ENCODE measurements at regions of chrX and their contacts with region 1.

Region 1: DNA sequence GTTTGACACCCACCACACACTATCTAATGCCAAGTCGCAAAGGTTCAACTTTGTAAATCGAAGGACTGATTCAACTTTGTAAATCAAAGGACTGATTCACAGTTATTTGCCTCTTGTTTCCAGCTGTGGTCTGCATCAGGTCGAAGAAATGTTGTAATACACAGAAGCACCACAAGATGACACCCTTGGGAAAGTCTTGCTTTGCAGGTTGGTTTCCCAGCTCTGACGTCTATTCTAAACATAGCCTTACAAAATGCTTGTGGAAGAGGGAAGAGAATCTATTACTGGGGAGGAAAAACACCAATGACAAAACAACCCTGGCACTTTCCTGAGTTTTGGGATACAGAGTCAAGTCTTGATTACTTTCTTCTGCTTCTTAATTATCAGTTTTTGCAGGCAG is 35.3 kb downstream of the SUPT20HL1 start:
- DNase-seq: peak; percentile 58
- H3K4me3 Mint-ChIP-seq: no peak overlapping the region
- H3K27ac Mint-ChIP-seq: no peak overlapping the region
- H3K4me1 Mint-ChIP-seq: no peaks in the 10 kb centered on the region
- H3K27me3 Mint-ChIP-seq: no peaks in the 10 kb centered on the region

Region 2: DNA sequence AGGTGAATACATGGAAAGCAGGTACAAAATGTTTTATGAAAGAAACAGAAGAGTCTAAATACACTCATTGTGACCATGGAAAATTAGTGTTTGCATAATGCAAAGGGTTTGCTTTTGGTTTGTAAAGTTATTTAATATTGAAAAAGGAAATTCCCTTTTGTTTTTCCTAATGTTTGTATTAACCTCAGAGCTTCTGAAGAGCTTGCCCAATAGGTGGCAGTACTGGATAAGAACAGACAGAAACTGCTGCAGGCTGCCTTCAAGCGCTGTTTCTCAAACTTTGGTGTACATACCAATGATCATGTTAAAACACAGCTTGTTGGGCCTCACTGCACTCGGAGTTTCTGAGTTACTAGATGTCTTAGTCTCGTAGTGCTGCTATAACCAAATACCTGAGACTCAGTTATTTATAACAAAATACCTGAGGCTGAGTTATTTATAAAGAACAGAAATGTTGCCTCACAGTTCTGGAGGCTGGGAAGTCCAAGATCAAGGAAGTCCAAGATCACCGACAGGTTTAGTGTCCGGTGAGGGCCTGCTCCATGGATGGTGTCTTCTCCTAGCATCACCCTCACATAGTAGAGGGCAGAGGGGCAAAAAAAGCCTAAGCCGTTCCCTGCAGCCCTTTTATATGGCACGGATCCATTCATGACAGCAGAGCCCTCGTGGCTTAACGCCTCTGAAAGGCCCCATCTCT is 136.1 kb before region 1 on chrX:
- CTCF ChIA-PET with region 1: interaction called, 7 read pairs
- intact Hi-C with region 1: loop called (anchors 2 kb)
- DNase-seq: peak; percentile 52
- H3K4me3 Mint-ChIP-seq: no peak overlapping the region
- H3K27ac Mint-ChIP-seq: no peak overlapping the region
- H3K4me1 Mint-ChIP-seq: peaks cover 14% of the 10 kb centered on the region
- H3K27me3 Mint-ChIP-seq: no peaks in the 10 kb centered on the region

Region 3: GRCh38 chrX:24498975-24499374 is 103.2 kb after region 1 on chrX:
- CTCF ChIA-PET with region 1: interaction called, 103 read pairs
- intact Hi-C with region 1: loop called (anchors 1 kb)
- DNase-seq: no peak
- H3K4me3 Mint-ChIP-seq: no peak overlapping the region
- H3K27ac Mint-ChIP-seq: no peak overlapping the region
- H3K4me1 Mint-ChIP-seq: peaks cover 24% of the 10 kb centered on the region
- H3K27me3 Mint-ChIP-seq: no peaks in the 10 kb centered on the region

Region 4: GRCh38 chrX:24561121-24561520 is 165.3 kb after region 1 on chrX:
- CTCF ChIA-PET with region 1: interaction called, 7 read pairs
- intact Hi-C with region 1: loop called (anchors 1 kb)
- DNase-seq: no peak
- H3K4me3 Mint-ChIP-seq: no peak overlapping the region
- H3K27ac Mint-ChIP-seq: no peak overlapping the region
- H3K4me1 Mint-ChIP-seq: no peaks in the 10 kb centered on the region
- H3K27me3 Mint-ChIP-seq: no peaks in the 10 kb centered on the region

Region 5: GRCh38 chrX:24647257-24648058 is 251.7 kb after region 1 on chrX and contains the start of gene PCYT1B:
- CTCF ChIA-PET with region 1: no interaction called
- intact Hi-C with region 1: loop called (anchors 10 kb)
- DNase-seq: peak; percentile 72
- H3K4me3 Mint-ChIP-seq: peak within 1 kb of the TSS; percentile 68
- H3K27ac Mint-ChIP-seq: no peak within 1 kb of the TSS
- H3K4me1 Mint-ChIP-seq: peaks cover 11% of the 10 kb centered on the region
- H3K27me3 Mint-ChIP-seq: peaks cover 6% of the 10 kb centered on the region
- total RNA-seq, gene PCYT1B: 0.17 TPM in 1 of 2 experiments, not detected in the other

Region 6: GRCh38 chrX:24682739-24683432 is 287.1 kb after region 1 on chrX:
- CTCF ChIA-PET with region 1: no interaction called
- intact Hi-C with region 1: loop called (anchors 2 kb)
- DNase-seq: peak; percentile 72
- H3K4me3 Mint-ChIP-seq: no peak overlapping the region
- H3K27ac Mint-ChIP-seq: peak overlapping the region; percentile 59
- H3K4me1 Mint-ChIP-seq: peaks cover 19% of the 10 kb centered on the region
- H3K27me3 Mint-ChIP-seq: peaks cover 6% of the 10 kb centered on the region